CD8-positive, alpha-beta memory T cell (primary cell): ENCODE measurements at regions of chr15 and their contacts with region 1.

Region 1: GRCh38 chr15:86743283-86743903 is 663.7 kb downstream of the AGBL1 start:
- DNase-seq: peak; percentile 18 to 68 (median 38)
- H3K4me3 ChIP-seq: no peak overlapping the region
- H3K4me3 Mint-ChIP-seq: no peak overlapping the region
- H3K27ac ChIP-seq: no peak overlapping the region
- H3K27ac Mint-ChIP-seq: no peak overlapping the region
- H3K4me1 ChIP-seq: no peaks in the 10 kb centered on the region
- H3K4me1 Mint-ChIP-seq: peaks cover 0 to 5% (median 0%) of the 10 kb centered on the region in 3 donors
- H3K27me3 ChIP-seq: no peaks in the 10 kb centered on the region
- H3K27me3 Mint-ChIP-seq: peaks cover 0 to 2% of the 10 kb centered on the region in 2 donors

Region 2: DNA sequence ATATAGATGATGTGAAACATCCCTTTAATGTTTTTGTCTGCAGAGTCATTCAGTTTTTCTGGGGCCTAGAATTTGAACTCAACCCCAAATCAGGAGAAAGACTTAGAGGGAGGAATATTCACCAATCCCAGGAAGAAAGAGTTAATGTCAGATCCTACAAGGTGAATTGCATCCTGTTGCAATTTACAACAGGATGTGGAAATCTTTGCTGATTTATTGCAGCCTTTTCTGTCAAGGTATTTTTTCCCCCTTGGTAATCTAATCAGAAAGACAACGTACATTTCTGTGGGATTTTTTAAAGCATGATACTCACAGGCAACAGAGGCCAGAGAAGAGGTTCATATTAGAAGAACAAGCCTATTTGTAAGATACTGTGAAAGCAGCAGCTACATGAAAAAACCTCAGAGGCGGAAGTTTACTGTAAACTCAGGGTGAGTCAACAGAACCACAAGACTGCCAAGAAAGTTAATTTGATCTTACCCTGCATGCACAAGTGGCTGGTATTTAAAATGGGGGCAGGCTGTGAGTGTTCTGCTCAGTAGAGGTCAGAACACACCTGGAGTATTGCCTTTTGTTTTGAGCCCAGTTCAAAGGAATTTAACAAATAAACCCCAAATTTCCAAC is 131.9 kb before region 1 on chr15:
- CTCF ChIA-PET with region 1: interaction called, 10 read pairs
- POLR2A ChIA-PET with region 1: no interaction called
- DNase-seq: peak in 3 of 5 donors; percentile 5 to 67 (median 46)
- H3K4me3 ChIP-seq: no peak overlapping the region
- H3K4me3 Mint-ChIP-seq: peak overlapping the region in 6 of 7 donors; percentile 6 to 50 (median 36)
- H3K27ac ChIP-seq: no peak overlapping the region
- H3K27ac Mint-ChIP-seq: peak overlapping the region; percentile 48 to 90 (median 76)
- H3K4me1 ChIP-seq: peaks cover 50% of the 10 kb centered on the region
- H3K4me1 Mint-ChIP-seq: peaks cover 53 to 73% (median 72%) of the 10 kb centered on the region in 3 donors
- H3K27me3 ChIP-seq: no peaks in the 10 kb centered on the region
- H3K27me3 Mint-ChIP-seq: peaks cover 0 to 5% of the 10 kb centered on the region in 2 donors

Region 3: DNA sequence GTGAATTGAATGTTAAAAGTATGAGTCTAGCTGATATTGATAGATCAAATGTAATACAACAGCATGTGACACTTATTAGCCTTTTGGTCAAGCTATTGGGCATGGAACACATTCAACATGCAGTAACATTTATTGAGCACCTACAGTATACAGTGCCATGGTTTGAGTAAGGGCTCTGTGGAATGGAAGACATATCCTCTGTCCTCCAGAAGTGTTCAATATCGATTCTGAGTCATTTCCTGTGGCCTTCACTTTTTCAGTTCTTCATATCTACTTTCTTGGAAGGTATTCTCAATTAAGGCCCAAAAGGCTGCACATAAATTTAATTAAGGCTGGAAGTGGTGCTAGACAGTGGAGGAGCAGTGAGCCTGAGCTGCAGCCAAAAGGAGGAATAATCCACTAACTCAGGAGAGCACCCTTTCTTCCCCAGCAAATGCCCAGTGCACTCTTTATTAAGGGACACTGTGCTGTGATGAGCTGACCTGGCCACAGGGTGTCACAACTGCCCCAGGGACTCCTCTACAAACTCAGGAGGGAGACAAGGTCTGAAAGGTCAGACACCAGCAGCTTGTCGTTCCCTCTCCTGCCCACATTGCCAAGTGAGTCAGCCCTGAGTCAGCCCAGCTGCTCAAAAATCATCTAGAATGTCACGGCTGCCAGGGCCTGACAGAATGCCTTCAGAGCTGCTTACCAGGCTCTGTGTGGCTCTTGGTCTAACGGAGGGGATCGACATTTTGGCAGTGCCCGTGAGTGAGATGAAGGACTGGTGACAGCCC is 118.9 kb before region 1 on chr15:
- CTCF ChIA-PET with region 1: interaction called, 36 read pairs
- POLR2A ChIA-PET with region 1: interaction called, 3 read pairs
- DNase-seq: peak; percentile 7 to 82 (median 30)
- H3K4me3 ChIP-seq: no peak overlapping the region
- H3K4me3 Mint-ChIP-seq: peak overlapping the region in 3 of 7 donors; percentile 5 to 19 (median 13)
- H3K27ac ChIP-seq: no peak overlapping the region
- H3K27ac Mint-ChIP-seq: peak overlapping the region in 5 of 8 donors; percentile 4 to 87 (median 13)
- H3K4me1 ChIP-seq: peaks cover 7% of the 10 kb centered on the region
- H3K4me1 Mint-ChIP-seq: peaks cover 11 to 47% (median 29%) of the 10 kb centered on the region in 3 donors
- H3K27me3 ChIP-seq: no peaks in the 10 kb centered on the region
- H3K27me3 Mint-ChIP-seq: peaks cover 0 to 1% of the 10 kb centered on the region in 2 donors

Region 4: DNA sequence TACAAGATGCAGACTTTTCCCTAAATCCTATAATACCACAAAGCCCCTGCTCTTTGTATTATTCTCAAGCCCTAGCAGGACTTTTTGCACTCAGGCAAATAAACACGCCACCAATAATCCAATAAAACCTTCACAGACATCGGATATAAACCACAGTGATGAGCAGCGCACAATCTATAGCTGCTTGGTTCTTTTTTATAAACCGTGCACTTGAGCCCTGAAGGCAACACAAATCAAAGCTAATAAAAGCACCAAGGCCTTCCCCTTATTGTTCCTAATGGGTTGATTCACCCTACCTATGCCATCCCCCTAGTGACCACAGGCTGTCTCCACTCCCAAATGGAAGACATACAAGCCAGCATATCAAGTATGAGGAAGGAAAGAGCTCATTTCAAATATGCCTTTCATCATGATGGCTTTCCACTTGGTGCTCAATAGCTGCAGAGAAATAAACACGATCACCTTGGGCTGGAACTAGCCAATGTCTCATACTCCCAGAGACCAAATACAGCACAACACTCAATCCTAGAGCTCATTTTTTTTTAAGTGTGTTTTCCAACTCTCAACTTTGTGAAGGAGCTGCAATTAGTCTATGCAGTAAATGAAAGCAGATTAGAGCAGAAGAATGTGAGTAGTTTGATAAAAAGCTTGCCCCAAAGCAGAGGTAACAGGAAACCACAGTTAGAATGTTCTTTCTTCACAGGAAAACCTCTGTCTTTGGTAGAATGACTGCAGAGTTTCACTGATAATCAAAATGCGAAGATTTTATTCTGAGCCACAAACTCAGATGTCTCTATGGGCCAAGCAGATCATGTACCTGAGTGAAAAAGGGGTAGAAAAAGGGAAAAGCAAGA is 89.8 kb before region 1 on chr15:
- CTCF ChIA-PET with region 1: interaction called, 12 read pairs
- POLR2A ChIA-PET with region 1: no interaction called
- DNase-seq: peak in 2 of 5 donors; percentile 22 to 27
- H3K4me3 ChIP-seq: peak overlapping the region; percentile 46
- H3K4me3 Mint-ChIP-seq: peak overlapping the region; percentile 9 to 77 (median 70)
- H3K27ac ChIP-seq: no peak overlapping the region
- H3K27ac Mint-ChIP-seq: peak overlapping the region; percentile 45 to 96 (median 82)
- H3K4me1 ChIP-seq: peaks cover 64% of the 10 kb centered on the region
- H3K4me1 Mint-ChIP-seq: peaks cover 55 to 80% (median 77%) of the 10 kb centered on the region in 3 donors
- H3K27me3 ChIP-seq: no peaks in the 10 kb centered on the region
- H3K27me3 Mint-ChIP-seq: no peaks in the 10 kb centered on the region

Region 5: GRCh38 chr15:86773736-86774135 is 30.3 kb after region 1 on chr15:
- CTCF ChIA-PET with region 1: no interaction called
- POLR2A ChIA-PET with region 1: no interaction called
- DNase-seq: no peak
- H3K4me3 ChIP-seq: no peak overlapping the region
- H3K4me3 Mint-ChIP-seq: no peak overlapping the region
- H3K27ac ChIP-seq: no peak overlapping the region
- H3K27ac Mint-ChIP-seq: no peak overlapping the region
- H3K4me1 ChIP-seq: no peaks in the 10 kb centered on the region
- H3K4me1 Mint-ChIP-seq: no peaks in the 10 kb centered on the region
- H3K27me3 ChIP-seq: no peaks in the 10 kb centered on the region
- H3K27me3 Mint-ChIP-seq: peaks cover 0 to 1% of the 10 kb centered on the region in 2 donors